ENCODE measurements at regions of chr7 and their contacts with region 1.

Region 1: GRCh38 chr7:83936056-83936708 is 258.4 kb downstream of the SEMA3A start:
- DNase-seq: peak; percentile 21
- H3K4me3 ChIP-seq: no peak overlapping the region
- CTCF ChIP-seq: peak; percentile 82

Region 2: GRCh38 chr7:83947260-83947659 is 11.1 kb after region 1 on chr7:
- CTCF ChIA-PET with region 1: interaction called, 87 read pairs
- POLR2A ChIA-PET with region 1: no interaction called
- DNase-seq: no peak
- H3K4me3 ChIP-seq: no peak overlapping the region
- CTCF ChIP-seq: peak; percentile 25

Region 3: DNA sequence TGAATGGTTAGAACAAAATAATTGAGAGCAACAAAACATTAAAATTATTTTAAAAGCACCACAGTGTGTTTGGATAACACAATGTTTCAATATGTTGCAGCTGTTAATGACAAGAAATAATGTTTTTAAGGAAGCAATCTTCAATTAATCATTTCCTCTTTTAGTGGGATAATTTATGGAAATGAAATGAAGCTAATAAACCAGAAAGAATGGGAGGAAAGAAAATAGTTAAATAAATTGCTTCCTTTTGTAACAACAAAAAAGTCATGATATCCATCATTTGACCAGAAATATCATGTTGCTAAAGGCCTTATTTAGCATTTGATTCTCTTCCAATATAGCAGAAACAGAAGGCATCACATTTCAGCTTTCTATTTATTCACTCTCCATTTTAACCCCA is 33.9 kb after region 1 on chr7:
- CTCF ChIA-PET with region 1: interaction called, 10 read pairs
- POLR2A ChIA-PET with region 1: no interaction called
- DNase-seq: no peak
- H3K4me3 ChIP-seq: no peak overlapping the region
- CTCF ChIP-seq: no peak

Region 4: DNA sequence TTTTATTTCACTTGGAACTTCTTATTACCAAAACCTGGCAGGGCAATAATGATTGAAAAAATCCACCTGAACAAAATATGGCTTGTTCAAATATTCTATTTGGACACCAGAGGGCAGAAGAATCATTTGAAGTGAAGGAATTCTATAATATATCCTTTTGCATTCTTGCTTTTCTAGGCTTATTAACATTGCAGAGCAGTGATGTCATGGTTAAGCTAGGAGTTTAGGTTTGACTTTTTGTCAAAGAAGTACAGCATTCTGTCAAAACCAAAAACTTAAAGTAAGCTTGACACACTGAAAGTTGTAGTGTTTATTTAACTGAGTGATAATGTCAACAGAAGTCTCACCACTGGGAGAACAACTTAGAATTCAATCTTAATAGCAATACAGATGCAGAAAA is 1094.7 kb after region 1 on chr7:
- CTCF ChIA-PET with region 1: interaction called, 613 read pairs
- POLR2A ChIA-PET with region 1: no interaction called
- DNase-seq: peak; percentile 26
- H3K4me3 ChIP-seq: no peak overlapping the region
- CTCF ChIP-seq: peak; percentile 8